ENCODE measurements at regions of chr19 and their contacts with region 1.

Region 1: DNA sequence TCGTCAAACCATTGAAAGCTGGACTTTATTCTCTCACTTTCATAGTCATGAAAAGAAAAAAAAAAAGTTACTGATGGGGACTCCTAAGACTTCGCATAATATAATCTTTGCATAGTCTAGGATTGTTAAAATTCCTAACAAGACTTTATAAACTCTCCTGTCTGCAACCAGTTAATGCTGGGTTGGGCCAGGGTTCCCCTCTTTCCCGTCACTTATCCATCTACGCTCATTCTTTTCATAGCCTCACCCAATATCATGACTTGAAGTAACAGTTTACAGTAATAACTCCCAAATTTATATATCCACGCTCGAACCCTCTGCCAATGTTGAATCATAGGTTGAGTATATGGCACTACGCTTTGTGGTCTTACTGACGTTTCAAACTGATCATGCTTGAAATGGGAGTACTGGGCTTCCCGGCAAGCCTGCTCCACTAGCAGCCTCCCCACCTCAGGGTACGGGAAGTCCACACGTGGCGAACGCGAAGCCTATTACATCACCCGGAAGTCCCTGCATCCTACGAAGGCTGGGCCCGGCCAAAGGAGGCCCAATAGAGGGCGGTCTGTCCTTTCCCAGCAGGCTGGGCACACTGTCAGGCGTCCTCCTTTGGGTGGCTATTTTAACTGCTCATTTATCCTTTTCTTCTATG is 743 bp upstream of the ZNF460 start:
- DNase-seq: peak; percentile 96
- H3K4me3 ChIP-seq: peak overlapping the region; percentile 92
- H3K27ac ChIP-seq: peak overlapping the region; percentile 98
- H3K4me1 ChIP-seq: peaks cover 13% of the 10 kb centered on the region
- H3K27me3 ChIP-seq: no peaks in the 10 kb centered on the region
- CTCF ChIP-seq: peak; percentile 31; the same call in 1 of the 2 replicates

Region 2: GRCh38 chr19:57240311-57241090 is 39.0 kb before region 1 on chr19 and contains the start of gene ZNF805:
- CTCF ChIA-PET with region 1: no interaction called
- POLR2A ChIA-PET with region 1: no interaction called
- intact Hi-C with region 1: loop called (anchors 1 kb)
- DNase-seq: peak; percentile 95
- H3K4me3 ChIP-seq: peak within 1 kb of the TSS; percentile 93
- H3K27ac ChIP-seq: peak within 1 kb of the TSS; percentile 87
- H3K4me1 ChIP-seq: peaks cover 13% of the 10 kb centered on the region
- H3K27me3 ChIP-seq: no peaks in the 10 kb centered on the region
- CTCF ChIP-seq: no peak
- total RNA-seq, gene ZNF805: 11.7 and 14.7 TPM in 2 replicates

Region 3: GRCh38 chr19:57443120-57443696 is 163.7 kb after region 1 on chr19:
- CTCF ChIA-PET with region 1: no interaction called
- POLR2A ChIA-PET with region 1: no interaction called
- intact Hi-C with region 1: no loop called
- DNase-seq: no peak
- H3K4me3 ChIP-seq: no peak overlapping the region
- H3K27ac ChIP-seq: no peak overlapping the region
- H3K4me1 ChIP-seq: no peaks in the 10 kb centered on the region
- H3K27me3 ChIP-seq: no peaks in the 10 kb centered on the region
- CTCF ChIP-seq: no peak